SK-N-SH (cell line): ENCODE measurements at regions of chr1 and their contacts with region 1.

Region 1: DNA sequence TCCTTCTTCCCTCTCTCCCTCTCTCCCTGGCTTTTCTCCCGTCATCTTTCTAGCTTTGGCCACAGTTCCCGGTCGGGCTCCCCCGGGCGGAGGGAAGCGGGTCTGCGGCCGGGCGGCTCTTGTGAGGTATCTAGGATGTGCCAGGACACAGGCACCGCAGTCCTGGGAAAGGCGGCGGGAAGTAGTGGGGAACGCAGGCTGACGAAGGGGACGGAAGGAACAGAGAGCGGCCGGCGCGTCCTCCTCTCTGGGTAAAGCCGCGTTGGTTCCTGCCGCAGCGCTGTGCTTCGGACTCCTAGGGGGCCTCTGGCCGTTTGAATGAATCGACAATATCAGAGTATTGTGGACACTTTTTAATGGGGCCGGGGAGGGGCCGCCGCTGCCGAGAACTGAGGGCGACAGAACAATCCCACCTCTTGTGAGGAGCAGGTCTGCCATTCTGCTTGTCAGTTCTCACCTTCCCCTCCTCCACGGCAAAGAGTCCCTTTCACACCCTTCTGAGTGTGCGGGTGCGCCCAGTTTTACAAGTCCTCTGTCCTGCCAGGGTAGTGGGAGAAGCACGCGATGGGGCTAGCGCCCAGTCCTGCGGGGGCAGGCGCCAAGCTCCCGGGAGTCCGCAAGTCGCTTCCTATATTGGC is 1.2 kb upstream of the LHX9 start:
- DNase-seq: peak; percentile 90
- H3K4me3 ChIP-seq: peak overlapping the region; percentile 81 to 91
- H3K27ac ChIP-seq: peak overlapping the region; percentile 56 to 66
- H3K4me1 ChIP-seq: peaks cover 0 to 33% of the 10 kb centered on the region in 2 experiments; a peak in 2 of 4 replicates
- H3K27me3 ChIP-seq: no peaks in the 10 kb centered on the region
- CTCF ChIP-seq: peak; percentile 81
- EP300 ChIP-seq: no peak
- RAD21 ChIP-seq: peak; percentile 50

Region 2: DNA sequence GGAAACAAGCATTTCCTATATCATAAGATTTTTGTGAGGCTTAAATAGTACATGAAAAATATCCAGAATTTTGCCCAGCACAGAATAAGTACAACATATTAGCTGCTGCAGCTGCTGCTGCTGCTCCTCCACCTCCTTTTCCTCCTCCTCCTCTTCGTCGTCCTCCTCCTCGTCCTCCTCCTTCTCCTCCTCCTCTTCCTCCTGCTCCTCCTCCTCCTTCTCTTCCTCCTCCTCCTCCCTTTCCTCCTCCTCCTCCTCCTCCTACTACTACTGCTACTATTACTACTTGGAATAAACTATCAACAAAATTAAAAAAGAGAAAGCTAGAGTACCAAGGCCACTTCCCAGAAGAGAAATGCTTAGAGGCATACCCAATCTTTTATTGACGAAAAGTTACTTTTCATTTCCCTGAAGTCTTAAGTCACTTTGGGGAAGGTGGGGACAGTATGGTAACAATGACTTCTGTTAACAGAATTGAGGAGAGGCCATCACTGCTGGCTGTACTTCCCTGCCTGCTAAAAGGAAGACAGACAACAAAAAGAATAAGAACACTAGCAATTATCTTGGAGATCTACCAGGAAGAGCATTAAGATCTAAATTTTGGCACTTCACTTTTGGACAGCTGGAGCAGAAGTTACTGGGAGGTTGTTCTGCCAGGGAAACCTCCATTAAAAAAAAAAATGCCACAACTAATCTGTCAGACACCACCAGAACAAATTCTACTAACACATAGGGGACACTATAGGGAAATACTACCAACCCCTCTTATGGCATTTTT is 147.8 kb before region 1 on chr1:
- CTCF ChIA-PET with region 1: no interaction called
- POLR2A ChIA-PET with region 1: no interaction called
- DNase-seq: no peak
- H3K4me3 ChIP-seq: no peak overlapping the region
- H3K27ac ChIP-seq: no peak overlapping the region
- H3K4me1 ChIP-seq: no peaks in the 10 kb centered on the region; a peak in 1 of 4 replicates
- H3K27me3 ChIP-seq: no peaks in the 10 kb centered on the region
- CTCF ChIP-seq: no peak
- EP300 ChIP-seq: no peak
- RAD21 ChIP-seq: no peak

Region 3: GRCh38 chr1:197902454-197903195 is 13.4 kb before region 1 on chr1 and contains the start of gene C1orf53:
- CTCF ChIA-PET with region 1: interaction called, 46 read pairs
- POLR2A ChIA-PET with region 1: interaction called, 3 read pairs
- DNase-seq: peak; percentile 97
- H3K4me3 ChIP-seq: peak within 1 kb of the TSS; percentile 86 to 88
- H3K27ac ChIP-seq: peak within 1 kb of the TSS; percentile 71 to 99
- H3K4me1 ChIP-seq: peaks cover 5 to 6% of the 10 kb centered on the region in 2 experiments; a peak in 2 of 4 replicates
- H3K27me3 ChIP-seq: no peaks in the 10 kb centered on the region
- CTCF ChIP-seq: no peak
- EP300 ChIP-seq: no peak
- RAD21 ChIP-seq: no peak
- polyA plus RNA-seq, gene C1orf53: 22.9 and 24.9 TPM in 2 replicates

Region 4: GRCh38 chr1:198088360-198089071 is 172.5 kb after region 1 on chr1:
- CTCF ChIA-PET with region 1: no interaction called
- POLR2A ChIA-PET with region 1: no interaction called
- DNase-seq: peak; percentile 13
- H3K4me3 ChIP-seq: peak overlapping the region in 1 of 2 experiments; percentile 14; a peak in 1 of 4 replicates
- H3K27ac ChIP-seq: peak overlapping the region; percentile 59 to 79; a peak in 3 of 4 replicates
- H3K4me1 ChIP-seq: no peaks in the 10 kb centered on the region; a peak in 2 of 4 replicates
- H3K27me3 ChIP-seq: no peaks in the 10 kb centered on the region
- CTCF ChIP-seq: peak; percentile 74
- EP300 ChIP-seq: no peak
- RAD21 ChIP-seq: peak; percentile 69

Region 5: GRCh38 chr1:198298640-198299039 is 382.7 kb after region 1 on chr1:
- CTCF ChIA-PET with region 1: no interaction called
- POLR2A ChIA-PET with region 1: no interaction called
- DNase-seq: peak; percentile 29
- H3K4me3 ChIP-seq: no peak overlapping the region
- H3K27ac ChIP-seq: no peak overlapping the region
- H3K4me1 ChIP-seq: peaks cover 5 to 7% of the 10 kb centered on the region in 2 experiments; a peak in 3 of 4 replicates
- H3K27me3 ChIP-seq: no peaks in the 10 kb centered on the region
- CTCF ChIP-seq: no peak
- EP300 ChIP-seq: no peak
- RAD21 ChIP-seq: no peak